ENCODE measurements at regions of chrX and their contacts with region 1.

Region 1: GRCh38 chrX:20362268-20363267 is 95.9 kb upstream of the RPS6KA3 start:
- DNase-seq: peak; percentile 24 to 41
- ATAC-seq: peak; percentile 89 to 94
- H3K4me3 ChIP-seq: no peak overlapping the region
- H3K27ac ChIP-seq: peak overlapping the region; percentile 78 to 87 (median 82)
- H3K4me1 ChIP-seq: peaks cover 20 to 24% of the 10 kb centered on the region in 2 donors
- H3K27me3 ChIP-seq: no peaks in the 10 kb centered on the region
- CTCF ChIP-seq: no peak
- POLR2A ChIP-seq: no peak

Region 2: GRCh38 chrX:18725310-18725943 is 1637.1 kb before region 1 on chrX:
- in situ Hi-C with region 1: no loop called
- intact Hi-C with region 1: no loop called
- DNase-seq: no peak
- ATAC-seq: no peak
- H3K4me3 ChIP-seq: no peak overlapping the region
- H3K27ac ChIP-seq: no peak overlapping the region
- H3K4me1 ChIP-seq: no peaks in the 10 kb centered on the region
- H3K27me3 ChIP-seq: no peaks in the 10 kb centered on the region
- CTCF ChIP-seq: no peak
- POLR2A ChIP-seq: no peak

Region 3: DNA sequence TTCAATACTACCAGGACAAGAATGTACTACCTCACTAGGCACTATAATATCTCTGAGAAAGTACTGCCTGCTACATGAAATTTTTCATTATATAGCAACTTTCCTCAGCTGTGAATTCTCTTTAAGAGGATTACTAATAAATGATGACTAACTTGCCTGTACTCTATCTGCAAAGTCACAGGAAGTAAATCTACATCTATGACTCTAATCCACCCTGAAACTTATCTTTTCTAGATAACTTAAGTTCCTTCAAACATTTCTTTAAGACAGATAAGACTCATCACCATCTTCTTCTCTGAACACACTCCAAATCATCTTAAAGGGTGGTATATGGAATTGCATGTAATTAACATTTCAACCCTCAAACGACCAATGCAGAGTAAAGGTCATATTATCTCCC is 124.7 kb before region 1 on chrX:
- in situ Hi-C with region 1: no loop called
- intact Hi-C with region 1: no loop called
- DNase-seq: no peak
- ATAC-seq: no peak
- H3K4me3 ChIP-seq: no peak overlapping the region
- H3K27ac ChIP-seq: no peak overlapping the region
- H3K4me1 ChIP-seq: no peaks in the 10 kb centered on the region
- H3K27me3 ChIP-seq: no peaks in the 10 kb centered on the region
- CTCF ChIP-seq: no peak
- POLR2A ChIP-seq: no peak

Region 4: GRCh38 chrX:20309806-20310205 is 52.8 kb before region 1 on chrX:
- in situ Hi-C with region 1: no loop called
- intact Hi-C with region 1: loop called (anchors 5 kb)
- DNase-seq: no peak
- ATAC-seq: no peak
- H3K4me3 ChIP-seq: no peak overlapping the region
- H3K27ac ChIP-seq: peak overlapping the region in 2 of 4 donors; percentile 30 to 83
- H3K4me1 ChIP-seq: peaks cover 8% of the 10 kb centered on the region in 2 donors
- H3K27me3 ChIP-seq: no peaks in the 10 kb centered on the region
- CTCF ChIP-seq: no peak
- POLR2A ChIP-seq: no peak

Region 5: GRCh38 chrX:20325786-20326388 is 36.7 kb before region 1 on chrX:
- in situ Hi-C with region 1: no loop called
- intact Hi-C with region 1: loop called (anchors 5 kb)
- DNase-seq: peak; percentile 10 to 26
- ATAC-seq: peak; percentile 92 to 98
- H3K4me3 ChIP-seq: no peak overlapping the region
- H3K27ac ChIP-seq: peak overlapping the region; percentile 61 to 75 (median 68)
- H3K4me1 ChIP-seq: peaks cover 7 to 11% of the 10 kb centered on the region in 2 donors
- H3K27me3 ChIP-seq: no peaks in the 10 kb centered on the region
- CTCF ChIP-seq: no peak
- POLR2A ChIP-seq: peak in 1 of 2 donors; percentile 1

Region 6: GRCh38 chrX:20693078-20693477 is 330.5 kb after region 1 on chrX:
- in situ Hi-C with region 1: no loop called
- intact Hi-C with region 1: no loop called
- DNase-seq: no peak
- ATAC-seq: no peak
- H3K4me3 ChIP-seq: no peak overlapping the region
- H3K27ac ChIP-seq: no peak overlapping the region
- H3K4me1 ChIP-seq: no peaks in the 10 kb centered on the region
- H3K27me3 ChIP-seq: no peaks in the 10 kb centered on the region
- CTCF ChIP-seq: no peak
- POLR2A ChIP-seq: no peak